CD4-positive, alpha-beta memory T cell (primary cell): ENCODE measurements at regions of chr19 and their contacts with region 1.

Region 1: DNA sequence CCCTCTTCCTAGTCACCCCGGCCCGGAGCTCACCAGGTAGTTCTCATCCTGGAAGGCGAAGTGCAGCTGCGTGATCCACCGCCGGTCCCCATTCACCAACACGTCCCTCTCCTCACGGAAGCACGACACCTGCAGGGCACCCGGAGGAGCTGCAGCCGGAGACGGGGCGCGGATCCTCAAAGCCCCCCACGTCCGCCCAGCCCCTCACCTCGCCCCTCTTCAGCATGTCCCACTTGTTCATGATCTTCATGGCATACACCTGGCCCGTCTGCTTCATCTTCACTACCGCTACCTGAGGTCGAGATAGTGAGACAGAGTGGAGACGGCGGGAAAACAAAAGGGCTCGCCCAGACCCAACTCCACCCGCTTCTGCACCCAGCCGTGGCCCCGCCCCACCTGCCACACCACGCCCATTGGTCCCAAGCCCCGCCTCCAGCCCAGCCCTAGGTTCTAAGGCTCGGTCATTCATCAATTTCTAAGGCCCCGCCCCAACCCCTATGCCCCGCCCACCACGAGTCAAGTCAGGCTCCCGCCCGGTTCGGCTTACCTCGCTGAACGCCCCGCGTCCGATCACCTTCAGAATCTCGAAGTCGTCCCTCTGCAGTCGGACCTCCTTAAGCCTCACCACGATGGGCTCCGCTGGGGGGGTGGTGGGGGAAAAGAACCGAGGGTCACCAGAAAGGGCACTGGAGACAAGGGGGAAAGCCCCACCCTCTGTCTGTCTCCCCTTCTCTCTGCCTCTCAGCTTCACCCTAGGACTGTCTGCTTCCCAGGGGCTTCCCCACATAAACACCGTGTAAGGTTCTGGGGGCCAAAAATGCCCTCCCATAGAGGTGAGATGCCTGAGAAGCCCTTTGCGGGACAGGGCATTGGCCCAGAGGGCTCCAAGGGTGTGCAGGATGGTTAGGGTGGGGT is 2.8 kb downstream of the DMPK start:
- DNase-seq: peak; percentile 60 to 87 (median 68)
- H3K4me3 ChIP-seq: peak overlapping the region; percentile 42 to 52
- H3K4me3 Mint-ChIP-seq: peak overlapping the region; percentile 36 to 88 (median 84)
- H3K27ac ChIP-seq: no peak overlapping the region
- H3K27ac Mint-ChIP-seq: peak overlapping the region in 5 of 7 donors; percentile 44 to 88 (median 57)
- H3K4me1 ChIP-seq: peaks cover 20% of the 10 kb centered on the region
- H3K4me1 Mint-ChIP-seq: peaks cover 12 to 26% (median 18%) of the 10 kb centered on the region in 4 donors
- H3K27me3 ChIP-seq: peaks cover 13% of the 10 kb centered on the region
- H3K27me3 Mint-ChIP-seq: peaks cover 4 to 14% of the 10 kb centered on the region in 2 donors

Region 2: GRCh38 chr19:45798995-45799517 is 19.6 kb after region 1 on chr19:
- CTCF ChIA-PET with region 1: interaction called, 14 read pairs
- POLR2A ChIA-PET with region 1: interaction called, 3 read pairs
- intact Hi-C with region 1: no loop called
- DNase-seq: peak in 4 of 5 donors; percentile 57 to 65 (median 59)
- H3K4me3 ChIP-seq: no peak overlapping the region
- H3K4me3 Mint-ChIP-seq: no peak overlapping the region
- H3K27ac ChIP-seq: no peak overlapping the region
- H3K27ac Mint-ChIP-seq: peak overlapping the region in 1 of 7 donors; percentile 71
- H3K4me1 ChIP-seq: peaks cover 4% of the 10 kb centered on the region
- H3K4me1 Mint-ChIP-seq: peaks cover 4 to 12% (median 6%) of the 10 kb centered on the region in 4 donors
- H3K27me3 ChIP-seq: peaks cover 7% of the 10 kb centered on the region
- H3K27me3 Mint-ChIP-seq: peaks cover 13 to 20% of the 10 kb centered on the region in 2 donors